ENCODE measurements at regions of chr2 and their contacts with region 1.

Region 1: DNA sequence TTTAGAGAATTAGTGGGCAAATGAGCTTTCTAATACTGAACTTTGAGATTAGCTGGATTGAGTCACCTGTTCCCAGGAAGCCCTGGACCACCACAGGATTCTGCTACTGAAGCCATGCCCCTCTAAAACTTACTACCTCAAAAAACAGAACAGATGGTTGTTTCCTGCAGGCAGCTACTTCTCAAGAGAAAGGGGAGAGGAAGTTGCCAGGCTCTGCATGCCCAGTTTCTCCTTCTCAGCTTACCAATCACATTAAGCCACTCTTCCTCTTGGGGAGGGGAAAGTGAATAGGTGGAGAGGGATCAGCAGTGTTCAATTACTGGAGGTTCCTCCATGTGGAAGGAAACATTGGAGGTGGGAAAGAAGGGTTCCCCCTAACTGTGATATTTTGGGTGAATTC is 24.9 kb upstream of the C1GALT1C1L start:
- DNase-seq: no peak
- H3K4me3 ChIP-seq: no peak overlapping the region
- H3K27ac ChIP-seq: no peak overlapping the region
- H3K4me1 ChIP-seq: no peaks in the 10 kb centered on the region
- CTCF ChIP-seq: no peak

Region 2: GRCh38 chr2:44009135-44009735 is 308.1 kb after region 1 on chr2:
- CTCF ChIA-PET with region 1: no interaction called
- POLR2A ChIA-PET with region 1: interaction called, 11 read pairs
- intact Hi-C with region 1: no loop called
- DNase-seq: no peak
- H3K4me3 ChIP-seq: no peak overlapping the region
- H3K27ac ChIP-seq: no peak overlapping the region
- H3K4me1 ChIP-seq: peaks cover 12% of the 10 kb centered on the region
- CTCF ChIP-seq: peak; percentile 33; the same call in 1 of the 2 replicates